Aorta (tissue), 5 donors: ENCODE measurements at regions of chr1 and their contacts with region 1.

Region 1: GRCh38 chr1:93304716-93305138 is 41.0 kb upstream of the DR1 start:
- DNase-seq: no peak
- ATAC-seq: peak; percentile 80
- H3K4me3 ChIP-seq: no peak overlapping the region
- H3K27ac ChIP-seq: no peak overlapping the region
- H3K4me1 ChIP-seq: no peaks in the 10 kb centered on the region
- H3K27me3 ChIP-seq: no peaks in the 10 kb centered on the region

Region 2: DNA sequence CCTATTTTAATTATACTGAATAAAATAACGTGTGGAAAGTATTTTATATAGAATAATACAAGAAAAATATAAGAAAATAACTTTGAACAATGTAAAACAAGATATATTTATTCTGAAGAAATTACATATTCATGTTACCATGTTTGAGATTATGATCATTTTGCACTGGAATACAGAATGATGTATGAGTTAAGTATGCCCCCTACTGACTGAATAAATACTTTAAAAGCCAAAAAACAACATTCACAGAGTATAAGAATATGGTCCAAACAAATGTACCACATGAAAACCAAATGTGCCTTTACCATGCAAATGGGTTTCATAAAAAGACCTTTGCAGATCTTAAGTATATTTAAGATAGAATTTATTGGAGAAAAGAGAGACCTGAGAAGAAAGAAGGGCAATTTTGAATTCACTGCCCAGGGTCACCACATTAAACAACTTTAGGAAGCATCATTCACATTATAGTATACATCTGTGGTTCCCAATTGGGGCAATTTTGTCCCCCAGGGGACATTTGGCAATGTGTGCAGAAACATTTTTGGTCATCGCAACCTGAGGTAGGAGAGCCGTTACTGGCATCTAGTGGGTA is 681.4 kb before region 1 on chr1:
- intact Hi-C with region 1: no loop called
- DNase-seq: no peak
- ATAC-seq: no peak
- H3K4me3 ChIP-seq: no peak overlapping the region
- H3K27ac ChIP-seq: no peak overlapping the region
- H3K4me1 ChIP-seq: no peaks in the 10 kb centered on the region
- H3K27me3 ChIP-seq: no peaks in the 10 kb centered on the region

Region 3: DNA sequence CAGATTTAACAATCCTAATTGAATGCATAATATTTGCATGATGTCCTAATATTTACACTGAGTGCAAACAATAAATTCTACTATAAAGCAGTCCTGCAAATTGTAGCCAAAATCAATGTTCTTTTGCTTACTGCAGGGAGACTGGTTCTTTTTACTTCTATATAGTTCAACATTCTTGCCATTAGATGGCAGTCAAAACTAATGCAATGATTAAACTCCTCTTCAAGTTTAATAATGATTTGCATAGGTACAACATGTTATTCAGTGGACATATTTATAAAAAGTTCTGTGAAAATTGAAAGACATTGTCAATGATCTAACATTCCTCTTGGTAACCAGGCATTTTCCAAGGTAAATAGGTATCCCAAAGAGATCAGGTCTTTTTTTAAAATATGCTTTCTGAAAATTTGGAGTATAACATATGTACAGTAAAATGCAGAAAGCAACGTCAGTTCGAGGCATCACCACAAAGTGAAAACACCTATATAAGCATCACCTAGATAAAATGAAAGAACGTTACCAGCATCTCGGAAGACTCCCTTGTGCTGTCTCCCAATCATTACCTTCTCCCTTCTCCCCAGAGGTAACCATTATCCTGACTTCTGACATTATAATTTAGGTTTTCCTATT is 133.4 kb after region 1 on chr1:
- intact Hi-C with region 1: loop called in 1 of 2 experiments (anchors 10 kb)
- DNase-seq: no peak
- ATAC-seq: no peak
- H3K4me3 ChIP-seq: no peak overlapping the region
- H3K27ac ChIP-seq: no peak overlapping the region
- H3K4me1 ChIP-seq: no peaks in the 10 kb centered on the region
- H3K27me3 ChIP-seq: peaks cover 0 to 2% of the 10 kb centered on the region in 2 donors